Gastrocnemius medialis (tissue), 4 donors: ENCODE measurements at regions of chr1 and their contacts with region 1.

Region 1: GRCh38 chr1:31296486-31297276 is at the starts of genes SNRNP40 and ZCCHC17:
- DNase-seq: peak; percentile 97
- ATAC-seq: peak; percentile 100
- H3K4me3 ChIP-seq: peak within 1 kb of the TSS; percentile 80 to 99 (median 98)
- H3K27ac ChIP-seq: peak within 1 kb of the TSS; percentile 88 to 98 (median 94)
- H3K4me1 ChIP-seq: peaks cover 44% of the 10 kb centered on the region in 2 donors
- H3K27me3 ChIP-seq: no peaks in the 10 kb centered on the region
- CTCF ChIP-seq: peak in 2 of 5 experiments; percentile 21 to 28
- POLR2A ChIP-seq: peak; percentile 78 to 92
- total RNA-seq, gene SNRNP40: 21.9 to 32.1 (median 23.6) TPM
- total RNA-seq, gene ZCCHC17: 14.0 to 26.8 (median 17.5) TPM

Region 2: GRCh38 chr1:31163866-31164265 is 132.8 kb before region 1 on chr1:
- in situ Hi-C with region 1: no loop called
- intact Hi-C with region 1: loop called (anchors 2 kb)
- DNase-seq: no peak
- ATAC-seq: no peak
- H3K4me3 ChIP-seq: no peak overlapping the region
- H3K27ac ChIP-seq: no peak overlapping the region
- H3K4me1 ChIP-seq: peaks cover 4 to 5% of the 10 kb centered on the region in 2 donors
- H3K27me3 ChIP-seq: no peaks in the 10 kb centered on the region
- CTCF ChIP-seq: no peak
- POLR2A ChIP-seq: no peak

Region 3: DNA sequence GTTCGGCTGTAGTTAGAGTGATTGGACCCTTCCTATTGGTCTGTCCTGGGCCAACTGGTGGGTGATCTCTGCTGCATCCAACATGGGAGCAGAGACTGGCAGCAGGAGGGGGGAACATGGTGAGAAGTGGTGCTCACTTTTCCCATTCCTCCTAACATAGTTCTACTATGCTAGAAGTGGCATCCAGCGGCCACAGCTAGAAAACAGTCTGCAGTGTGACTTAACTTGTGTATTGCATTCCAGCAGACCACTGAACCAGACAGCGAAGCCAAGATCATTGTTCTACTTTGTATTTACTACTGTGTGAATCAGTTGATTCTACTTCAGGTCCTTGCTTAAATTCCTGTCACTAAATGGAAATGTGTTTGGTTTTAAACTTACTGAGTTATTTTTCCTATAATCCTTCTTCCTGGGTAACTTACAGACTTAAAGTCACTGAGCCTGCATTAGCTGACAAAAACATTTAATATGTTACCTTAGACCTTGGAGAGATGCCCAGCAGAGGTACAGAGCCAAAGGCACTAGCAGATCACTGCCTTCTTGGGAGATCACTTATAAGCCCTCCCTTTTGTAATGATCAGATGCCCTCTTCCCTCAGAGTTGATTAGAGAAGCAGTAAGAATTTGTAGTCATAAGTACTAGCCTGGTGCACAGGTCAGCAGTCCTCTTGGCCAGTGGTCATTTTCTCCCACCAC is 68.0 kb after region 1 on chr1:
- in situ Hi-C with region 1: no loop called
- intact Hi-C with region 1: no loop called
- DNase-seq: no peak
- ATAC-seq: no peak
- H3K4me3 ChIP-seq: no peak overlapping the region
- H3K27ac ChIP-seq: peak overlapping the region; percentile 74 to 100 (median 99)
- H3K4me1 ChIP-seq: peaks cover 46% of the 10 kb centered on the region in 2 donors
- H3K27me3 ChIP-seq: no peaks in the 10 kb centered on the region
- CTCF ChIP-seq: no peak
- POLR2A ChIP-seq: no peak

Region 4: GRCh38 chr1:31715087-31715872 is 418.6 kb after region 1 on chr1:
- in situ Hi-C with region 1: no loop called
- intact Hi-C with region 1: no loop called
- DNase-seq: peak; percentile 88 to 94
- ATAC-seq: peak; percentile 89
- H3K4me3 ChIP-seq: peak overlapping the region; percentile 50 to 80 (median 64)
- H3K27ac ChIP-seq: peak overlapping the region; percentile 84 to 97 (median 94)
- H3K4me1 ChIP-seq: peaks cover 4 to 22% of the 10 kb centered on the region in 2 donors
- H3K27me3 ChIP-seq: no peaks in the 10 kb centered on the region
- CTCF ChIP-seq: peak; percentile 79 to 93 (median 88)
- POLR2A ChIP-seq: peak; percentile 74 to 88